Right ventricle myocardium superior (tissue), 1 donor: ENCODE measurements at regions of chr15 and their contacts with region 1.

Region 1: GRCh38 chr15:44195151-44195740 is at the start of gene FRMD5:
- DNase-seq: peak; percentile 88
- ATAC-seq: peak; percentile 98
- total RNA-seq, gene FRMD5: 44.0 TPM

Region 2: DNA sequence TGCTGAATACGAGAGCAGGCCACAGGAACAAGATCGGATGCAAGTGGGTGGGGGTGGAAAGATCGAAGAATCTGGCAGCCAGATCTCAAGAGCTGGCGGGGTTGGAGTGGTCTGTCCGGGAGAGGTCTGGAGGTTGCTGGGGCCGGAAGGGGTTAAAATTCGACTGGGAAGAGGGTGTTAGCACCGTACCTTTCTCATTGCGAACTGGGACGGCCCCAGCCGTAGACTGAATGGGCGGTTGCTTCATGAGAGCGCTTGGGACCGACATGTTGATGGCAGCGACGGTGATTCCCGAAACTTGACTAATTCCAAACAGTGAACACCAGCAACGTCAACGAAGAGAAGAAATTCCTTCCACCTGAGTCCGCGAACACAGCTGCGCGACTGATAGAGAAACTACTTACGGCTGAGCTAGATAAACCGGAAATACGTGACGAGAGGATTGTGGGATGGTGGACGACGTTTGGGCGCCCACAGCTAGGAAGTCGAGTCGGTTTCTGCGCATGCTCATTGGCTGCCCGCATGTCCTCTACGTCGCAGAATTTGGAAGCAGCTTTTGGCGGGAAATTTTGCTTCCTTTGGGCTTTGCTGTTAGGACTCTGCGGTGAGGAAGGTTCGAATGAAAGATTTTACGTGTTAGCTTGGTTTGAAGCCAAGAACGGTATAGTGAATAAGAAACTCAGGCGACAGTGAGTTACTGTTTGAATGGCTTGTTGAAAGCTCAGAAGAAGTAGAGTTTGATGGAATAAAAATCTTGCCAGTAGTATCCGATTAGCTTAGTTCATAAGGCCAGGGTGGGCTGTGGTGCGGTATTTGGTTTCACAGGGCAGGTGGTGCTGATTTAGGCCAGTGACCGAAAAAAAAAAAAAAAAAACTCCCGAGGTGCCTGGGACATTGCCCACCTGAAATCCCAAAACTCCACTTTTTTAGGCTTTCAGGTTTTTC is 370.7 kb before region 1 on chr15 and contains the start of gene MFAP1:
- intact Hi-C with region 1: no loop called
- DNase-seq: peak; percentile 96
- ATAC-seq: peak; percentile 97
- total RNA-seq, gene MFAP1: 16.9 TPM

Region 3: DNA sequence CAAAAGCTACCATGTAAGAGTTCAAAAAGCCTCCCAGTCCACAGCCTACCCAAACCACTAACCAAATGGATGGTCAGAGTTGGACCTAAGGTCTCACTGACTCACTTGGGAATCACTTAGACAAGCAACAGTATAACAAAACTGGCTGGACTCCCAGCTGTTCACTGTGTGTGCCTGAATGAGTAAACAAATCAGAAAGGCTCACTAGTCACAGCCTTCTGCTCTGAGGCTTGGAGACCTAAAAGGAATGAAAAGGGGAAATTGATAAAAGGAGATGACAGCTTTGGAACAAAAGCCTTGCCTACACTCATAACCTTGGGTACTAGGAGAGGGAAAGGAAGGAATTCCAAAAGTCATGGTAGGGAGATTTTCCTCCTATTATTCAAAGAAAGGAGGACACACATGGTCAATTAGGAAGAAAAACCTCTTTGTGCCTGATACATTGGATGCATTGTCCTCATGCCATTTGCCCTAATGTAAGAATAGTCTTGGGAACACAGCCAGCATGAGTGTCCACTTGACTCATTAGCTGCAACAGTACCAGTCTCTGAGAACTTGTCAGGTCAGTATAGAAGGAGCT is 92.5 kb before region 1 on chr15:
- intact Hi-C with region 1: loop called (anchors 10 kb)
- DNase-seq: no peak
- ATAC-seq: peak; percentile 90

Region 4: GRCh38 chr15:44173813-44174212 is 21.4 kb before region 1 on chr15:
- intact Hi-C with region 1: no loop called
- DNase-seq: no peak
- ATAC-seq: no peak